ENCODE measurements at regions of chr4 and their contacts with region 1.

Region 1: GRCh38 chr4:173013232-173013930 is 155.2 kb upstream of the GALNT7 start:
- DNase-seq: peak; percentile 64
- ATAC-seq: no peak
- H3K4me3 Mint-ChIP-seq: no peak overlapping the region
- H3K27ac Mint-ChIP-seq: no peak overlapping the region
- H3K4me1 Mint-ChIP-seq: peaks cover 4% of the 10 kb centered on the region
- H3K27me3 Mint-ChIP-seq: peaks cover 7% of the 10 kb centered on the region

Region 2: DNA sequence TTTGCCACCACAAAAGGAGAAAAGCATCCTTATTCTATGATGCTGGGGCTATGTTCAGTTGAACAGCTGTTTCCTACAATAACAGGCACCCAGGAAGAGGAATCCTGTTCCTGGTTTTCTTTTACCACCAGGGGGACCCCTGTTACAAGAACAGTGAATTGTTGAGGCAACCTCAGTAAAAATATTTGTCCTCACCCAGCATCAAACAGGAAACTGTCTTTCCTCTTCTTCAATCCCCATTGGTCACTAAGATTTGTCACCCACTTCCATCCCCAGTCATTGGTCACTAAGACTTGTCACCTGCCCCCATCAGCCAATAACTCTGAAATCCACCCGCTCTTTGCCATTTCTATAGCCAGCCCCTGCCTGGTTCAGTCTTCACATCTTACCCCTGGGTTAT is 11.8 kb after region 1 on chr4:
- CTCF ChIA-PET with region 1: interaction called, 34 read pairs
- POLR2A ChIA-PET with region 1: no interaction called
- DNase-seq: peak; percentile 36
- ATAC-seq: peak; percentile 63
- H3K4me3 Mint-ChIP-seq: no peak overlapping the region
- H3K27ac Mint-ChIP-seq: no peak overlapping the region
- H3K4me1 Mint-ChIP-seq: peaks cover 4% of the 10 kb centered on the region
- H3K27me3 Mint-ChIP-seq: peaks cover 3% of the 10 kb centered on the region

Region 3: GRCh38 chr4:173138624-173139023 is 125.2 kb after region 1 on chr4:
- CTCF ChIA-PET with region 1: no interaction called
- POLR2A ChIA-PET with region 1: no interaction called
- DNase-seq: no peak
- ATAC-seq: no peak
- H3K4me3 Mint-ChIP-seq: no peak overlapping the region
- H3K27ac Mint-ChIP-seq: no peak overlapping the region
- H3K4me1 Mint-ChIP-seq: no peaks in the 10 kb centered on the region
- H3K27me3 Mint-ChIP-seq: peaks cover 6% of the 10 kb centered on the region

Region 4: GRCh38 chr4:173264684-173265185 is 251.4 kb after region 1 on chr4:
- CTCF ChIA-PET with region 1: interaction called, 21 read pairs
- POLR2A ChIA-PET with region 1: no interaction called
- DNase-seq: peak; percentile 33
- ATAC-seq: peak; percentile 80
- H3K4me3 Mint-ChIP-seq: no peak overlapping the region
- H3K27ac Mint-ChIP-seq: no peak overlapping the region
- H3K4me1 Mint-ChIP-seq: peaks cover 14% of the 10 kb centered on the region
- H3K27me3 Mint-ChIP-seq: no peaks in the 10 kb centered on the region

Region 5: DNA sequence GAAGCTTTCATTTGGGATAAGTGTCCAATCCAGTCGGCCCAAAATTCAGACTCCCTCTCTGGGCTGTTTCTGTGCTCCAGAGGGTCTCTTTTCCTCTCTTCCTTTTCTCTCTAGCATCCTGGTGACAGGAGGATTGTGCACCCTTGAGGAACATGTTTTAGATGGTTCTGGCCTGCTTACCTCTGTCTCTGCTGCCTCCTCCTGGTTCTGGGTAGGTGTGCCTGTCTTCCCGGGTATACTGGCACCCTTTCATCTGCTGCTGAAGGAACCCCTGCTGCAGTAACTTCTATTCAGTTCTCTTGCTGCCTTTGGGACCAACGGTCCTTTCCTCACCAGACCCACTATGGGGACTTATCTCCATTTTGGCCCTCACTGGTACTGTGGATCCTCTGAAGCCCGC is 267.6 kb after region 1 on chr4:
- CTCF ChIA-PET with region 1: interaction called, 30 read pairs
- POLR2A ChIA-PET with region 1: no interaction called
- DNase-seq: no peak
- ATAC-seq: no peak
- H3K4me3 Mint-ChIP-seq: no peak overlapping the region
- H3K27ac Mint-ChIP-seq: no peak overlapping the region
- H3K4me1 Mint-ChIP-seq: no peaks in the 10 kb centered on the region
- H3K27me3 Mint-ChIP-seq: no peaks in the 10 kb centered on the region

Region 6: GRCh38 chr4:173420324-173420752 is 407.0 kb after region 1 on chr4:
- CTCF ChIA-PET with region 1: interaction called, 13 read pairs
- POLR2A ChIA-PET with region 1: no interaction called
- DNase-seq: no peak
- ATAC-seq: no peak
- H3K4me3 Mint-ChIP-seq: no peak overlapping the region
- H3K27ac Mint-ChIP-seq: no peak overlapping the region
- H3K4me1 Mint-ChIP-seq: peaks cover 9% of the 10 kb centered on the region
- H3K27me3 Mint-ChIP-seq: peaks cover 9% of the 10 kb centered on the region

Measured in activated CD8-positive, alpha-beta T cell treated with anti-CD3 and anti-CD28 coated beads, Interleukin-2, amount 10 ng/mL, durations not matched to agents 7 days and 5 days (primary cell).